ENCODE measurements at regions of chr14 and their contacts with region 1.

Region 1: GRCh38 chr14:61578745-61579144 is 116.6 kb upstream of the HIF1A start:
- DNase-seq: no peak
- H3K4me3 Mint-ChIP-seq: no peak overlapping the region
- H3K27ac Mint-ChIP-seq: no peak overlapping the region
- H3K4me1 Mint-ChIP-seq: peaks cover 37% of the 10 kb centered on the region
- H3K27me3 Mint-ChIP-seq: peaks cover 74% of the 10 kb centered on the region

Region 2: DNA sequence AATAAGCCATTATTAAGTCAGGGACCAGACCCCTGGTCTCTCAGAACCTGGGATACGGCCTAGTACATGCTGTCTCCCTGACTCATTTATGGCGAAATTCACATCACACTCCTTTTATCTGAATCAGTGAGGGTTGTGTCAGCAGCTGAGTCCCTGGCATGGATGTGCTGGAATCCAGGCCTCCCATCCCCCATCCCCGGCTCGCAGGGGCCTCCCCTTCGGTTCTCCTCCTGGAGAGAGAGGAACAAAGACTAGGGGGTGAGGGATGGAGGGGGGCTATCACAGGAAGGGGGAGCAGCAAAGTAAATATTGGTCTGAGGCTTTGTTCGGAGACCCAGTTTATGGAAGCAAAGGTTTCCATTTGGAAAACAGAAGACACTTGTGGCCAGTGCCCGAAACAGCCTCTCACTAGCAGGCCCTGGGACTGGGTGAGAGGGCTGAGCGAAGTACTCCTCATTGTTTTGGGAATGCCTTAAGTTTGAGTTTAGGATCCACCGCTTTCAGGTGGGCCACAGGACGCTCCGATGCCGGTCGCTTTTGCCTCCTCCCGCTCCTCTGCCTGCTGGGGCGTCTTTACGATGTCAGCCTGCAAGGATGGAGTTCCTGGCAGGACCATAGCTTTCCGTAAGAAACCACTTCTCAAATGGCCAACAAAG is 112.4 kb before region 1 on chr14:
- intact Hi-C with region 1: no loop called
- DNase-seq: no peak
- H3K4me3 Mint-ChIP-seq: no peak overlapping the region
- H3K27ac Mint-ChIP-seq: no peak overlapping the region
- H3K4me1 Mint-ChIP-seq: peaks cover 45% of the 10 kb centered on the region
- H3K27me3 Mint-ChIP-seq: no peaks in the 10 kb centered on the region

Region 3: DNA sequence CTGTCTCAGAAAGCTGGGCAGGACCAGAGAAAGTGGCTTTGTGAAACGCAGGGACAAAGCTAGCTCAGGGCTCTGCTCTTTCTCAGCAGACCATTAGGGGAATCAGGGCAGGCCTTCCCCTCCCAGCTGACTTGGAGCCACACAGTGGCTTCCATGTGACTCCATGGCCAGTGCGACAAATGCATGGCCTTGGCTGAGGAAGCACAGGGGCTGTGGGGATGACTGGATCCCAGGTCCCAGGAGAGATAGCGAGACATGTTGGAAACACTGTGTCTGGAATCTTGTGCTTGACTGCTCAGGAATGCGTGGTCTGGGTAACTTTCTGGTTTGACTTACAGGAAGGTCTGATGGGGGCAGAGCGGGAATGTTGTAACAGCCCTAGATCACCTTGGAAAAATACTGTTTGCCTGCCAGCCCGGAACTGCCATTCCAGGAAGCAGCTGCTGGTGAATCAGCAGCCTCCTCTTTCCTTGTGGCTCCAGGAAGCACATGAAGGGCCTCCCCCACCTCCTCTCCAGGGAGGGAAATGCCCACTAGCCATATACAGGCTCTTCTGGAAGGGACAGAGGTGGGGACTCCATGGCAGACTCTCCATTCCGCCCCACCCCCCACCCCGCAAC is 17.0 kb before region 1 on chr14:
- intact Hi-C with region 1: loop called (anchors 2 kb)
- DNase-seq: no peak
- H3K4me3 Mint-ChIP-seq: no peak overlapping the region
- H3K27ac Mint-ChIP-seq: no peak overlapping the region
- H3K4me1 Mint-ChIP-seq: peaks cover 38% of the 10 kb centered on the region
- H3K27me3 Mint-ChIP-seq: peaks cover 1% of the 10 kb centered on the region

Region 4: GRCh38 chr14:61620130-61620946 is 41.6 kb after region 1 on chr14:
- intact Hi-C with region 1: loop called (anchors 5 kb)
- DNase-seq: no peak
- H3K4me3 Mint-ChIP-seq: no peak overlapping the region
- H3K27ac Mint-ChIP-seq: no peak overlapping the region
- H3K4me1 Mint-ChIP-seq: peaks cover 51% of the 10 kb centered on the region
- H3K27me3 Mint-ChIP-seq: no peaks in the 10 kb centered on the region